Activated CD4-positive, alpha-beta T cell treated with anti-CD3 and anti-CD28 coated beads for 36 hours (primary cell): ENCODE measurements at regions of chr18 and their contacts with region 1.

Region 1: DNA sequence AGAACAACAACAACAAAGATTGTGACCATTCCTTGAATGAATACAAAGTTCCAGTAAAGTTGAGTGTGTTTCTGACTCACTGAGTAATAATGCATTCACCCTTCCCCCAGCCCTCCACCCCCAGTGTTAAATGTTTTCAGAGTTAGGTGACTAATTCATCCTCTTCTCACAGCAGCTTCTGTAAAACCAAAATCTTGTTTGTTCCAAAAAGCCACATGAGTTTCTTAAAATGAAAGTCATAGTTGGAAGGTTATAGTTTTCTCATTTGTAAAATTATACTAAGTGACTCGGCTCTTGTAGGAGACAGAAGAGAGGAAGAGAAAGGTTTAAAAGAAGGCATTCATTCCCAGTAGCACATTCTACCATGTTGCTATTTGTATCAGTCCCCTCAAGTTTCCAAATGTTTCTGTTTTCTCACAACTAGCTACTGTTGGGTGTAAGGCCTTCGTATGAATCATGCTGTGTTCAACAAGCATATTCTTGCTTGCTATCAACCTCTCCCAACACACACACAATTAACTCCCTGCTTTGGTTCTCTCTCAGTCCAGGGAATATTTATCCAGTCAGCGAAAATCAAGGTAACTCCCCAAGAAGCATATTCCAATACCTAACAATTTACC is 75.3 kb downstream of the MBD2 start:
- DNase-seq: peak; percentile 83
- ATAC-seq: peak; percentile 82
- H3K4me3 Mint-ChIP-seq: peak overlapping the region; percentile 47
- H3K27ac Mint-ChIP-seq: peak overlapping the region; percentile 94
- H3K4me1 Mint-ChIP-seq: peaks cover 56% of the 10 kb centered on the region
- H3K27me3 Mint-ChIP-seq: no peaks in the 10 kb centered on the region

Region 2: DNA sequence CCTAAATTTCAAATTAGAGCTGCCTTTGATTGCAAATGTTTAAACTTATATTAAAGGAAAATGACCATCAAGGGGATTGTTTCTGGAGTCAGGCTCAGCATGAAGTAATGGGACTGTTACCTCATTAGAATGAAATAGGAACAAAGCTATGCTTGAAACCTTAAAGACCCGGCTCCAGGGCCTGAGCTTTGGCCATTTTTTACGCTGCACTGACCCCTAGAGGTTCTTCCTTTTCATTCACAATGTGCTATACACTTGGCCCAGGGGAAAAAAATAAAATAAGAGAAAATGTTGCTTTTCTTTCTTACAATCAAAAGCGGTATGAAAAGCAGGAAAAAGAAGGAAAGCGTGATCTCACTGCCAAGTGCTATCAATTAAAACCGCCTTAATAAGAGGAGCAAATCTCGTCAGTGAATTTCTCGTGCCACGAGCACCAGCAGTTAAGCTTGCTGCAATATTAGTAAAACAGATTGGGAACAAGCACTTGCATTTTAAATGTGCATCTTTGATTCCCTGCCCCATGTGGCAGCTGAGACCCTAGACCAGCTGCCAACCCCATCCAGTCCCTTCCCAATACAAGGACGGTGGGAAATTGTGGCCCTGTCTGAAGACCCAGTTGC is 21.3 kb before region 1 on chr18:
- CTCF ChIA-PET with region 1: interaction called, 5 read pairs
- POLR2A ChIA-PET with region 1: no interaction called
- intact Hi-C with region 1: loop called in 1 of 2 experiments (anchors 1 kb)
- DNase-seq: peak; percentile 56
- ATAC-seq: peak; percentile 56
- H3K4me3 Mint-ChIP-seq: no peak overlapping the region
- H3K27ac Mint-ChIP-seq: no peak overlapping the region
- H3K4me1 Mint-ChIP-seq: peaks cover 10% of the 10 kb centered on the region
- H3K27me3 Mint-ChIP-seq: no peaks in the 10 kb centered on the region

Region 3: GRCh38 chr18:54181856-54182602 is 32.8 kb after region 1 on chr18:
- CTCF ChIA-PET with region 1: interaction called, 3 read pairs
- POLR2A ChIA-PET with region 1: no interaction called
- intact Hi-C with region 1: loop called (anchors 1 kb)
- DNase-seq: no peak
- ATAC-seq: peak; percentile 89
- H3K4me3 Mint-ChIP-seq: no peak overlapping the region
- H3K27ac Mint-ChIP-seq: no peak overlapping the region
- H3K4me1 Mint-ChIP-seq: peaks cover 10% of the 10 kb centered on the region
- H3K27me3 Mint-ChIP-seq: no peaks in the 10 kb centered on the region

Region 4: GRCh38 chr18:54261894-54262293 is 112.7 kb after region 1 on chr18:
- CTCF ChIA-PET with region 1: no interaction called
- POLR2A ChIA-PET with region 1: no interaction called
- intact Hi-C with region 1: loop called (anchors 1 kb)
- DNase-seq: peak; percentile 82
- ATAC-seq: peak; percentile 71
- H3K4me3 Mint-ChIP-seq: peak overlapping the region; percentile 52
- H3K27ac Mint-ChIP-seq: peak overlapping the region; percentile 90
- H3K4me1 Mint-ChIP-seq: peaks cover 54% of the 10 kb centered on the region
- H3K27me3 Mint-ChIP-seq: no peaks in the 10 kb centered on the region

Region 5: DNA sequence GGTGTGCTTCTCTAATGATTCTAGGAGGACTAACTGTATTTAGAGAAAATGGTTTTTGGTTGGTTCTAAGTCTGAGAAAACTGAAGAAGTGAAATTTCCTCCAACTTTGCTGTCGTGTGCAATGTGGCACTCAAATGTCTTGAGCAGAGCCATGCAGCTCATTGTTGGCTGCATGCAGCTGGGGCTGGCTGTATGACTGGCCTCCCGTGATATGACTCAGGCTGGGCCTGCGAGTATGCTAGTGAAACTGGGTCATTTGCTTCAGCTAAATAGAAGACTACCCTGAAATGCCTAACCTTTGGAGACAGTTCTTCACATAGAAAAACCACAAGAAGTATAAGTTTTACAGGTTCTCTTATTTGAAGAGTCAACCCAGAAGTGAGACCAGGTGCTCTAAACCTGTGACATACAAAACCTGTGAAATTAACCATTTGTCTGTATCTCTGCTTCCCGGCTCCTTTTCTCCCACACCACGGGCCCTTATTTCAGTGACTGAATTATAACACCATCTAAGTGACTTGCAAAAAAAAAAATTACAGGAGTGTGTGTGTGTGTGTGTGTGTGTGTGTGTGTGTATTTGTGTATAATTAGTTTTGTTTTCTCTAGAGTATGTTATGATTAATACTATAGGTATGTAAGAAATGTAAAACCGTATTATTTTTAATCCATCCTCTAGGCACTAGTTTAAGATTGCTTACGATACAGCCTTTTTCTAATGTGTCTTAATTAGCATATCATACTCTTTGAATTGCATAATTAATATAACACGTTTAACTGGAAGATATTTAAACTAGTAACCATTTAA is 136.0 kb after region 1 on chr18:
- CTCF ChIA-PET with region 1: no interaction called
- POLR2A ChIA-PET with region 1: interaction called, 3 read pairs
- intact Hi-C with region 1: loop called (anchors 1 kb)
- DNase-seq: peak; percentile 90
- ATAC-seq: peak; percentile 98
- H3K4me3 Mint-ChIP-seq: no peak overlapping the region
- H3K27ac Mint-ChIP-seq: peak overlapping the region; percentile 64
- H3K4me1 Mint-ChIP-seq: peaks cover 25% of the 10 kb centered on the region
- H3K27me3 Mint-ChIP-seq: no peaks in the 10 kb centered on the region

Region 6: DNA sequence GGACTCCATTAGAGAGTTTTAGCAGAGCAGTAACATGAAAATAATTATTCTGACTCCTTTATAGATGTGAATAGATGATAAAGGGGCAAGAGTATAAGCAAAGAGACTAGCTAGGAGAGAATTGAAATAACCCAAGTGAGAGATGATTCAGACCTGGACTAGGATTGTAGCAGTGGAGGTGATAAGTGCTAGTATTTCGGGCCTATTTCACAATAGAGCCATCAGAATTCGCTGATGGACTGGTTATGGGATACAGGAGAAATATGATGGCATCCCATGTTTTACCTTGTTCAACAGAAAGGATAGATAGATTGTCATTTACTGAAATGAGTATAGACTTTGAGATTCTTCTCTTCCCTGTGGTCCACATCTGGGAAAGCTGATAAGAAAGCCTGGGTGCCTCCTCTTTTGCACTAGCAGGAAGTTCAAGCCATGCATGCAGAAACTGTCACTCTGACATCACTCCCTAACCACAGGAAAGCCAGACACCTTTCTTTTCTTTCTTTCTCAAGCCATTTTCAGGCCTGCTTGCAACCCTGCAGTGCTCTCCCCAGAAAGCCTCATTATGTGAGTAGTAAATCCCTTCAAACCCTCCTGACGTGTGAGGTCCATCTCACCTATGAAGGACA is 467.1 kb after region 1 on chr18:
- CTCF ChIA-PET with region 1: no interaction called
- POLR2A ChIA-PET with region 1: no interaction called
- intact Hi-C with region 1: no loop called
- DNase-seq: no peak
- ATAC-seq: no peak
- H3K4me3 Mint-ChIP-seq: no peak overlapping the region
- H3K27ac Mint-ChIP-seq: no peak overlapping the region
- H3K4me1 Mint-ChIP-seq: peaks cover 7% of the 10 kb centered on the region
- H3K27me3 Mint-ChIP-seq: peaks cover 5% of the 10 kb centered on the region

Region 7: GRCh38 chr18:54717673-54718407 is 568.7 kb after region 1 on chr18:
- CTCF ChIA-PET with region 1: no interaction called
- POLR2A ChIA-PET with region 1: no interaction called
- intact Hi-C with region 1: loop called in 1 of 2 experiments (anchors 10 kb)
- DNase-seq: peak; percentile 74
- ATAC-seq: peak; percentile 91
- H3K4me3 Mint-ChIP-seq: peak overlapping the region; percentile 53
- H3K27ac Mint-ChIP-seq: peak overlapping the region; percentile 44
- H3K4me1 Mint-ChIP-seq: peaks cover 39% of the 10 kb centered on the region
- H3K27me3 Mint-ChIP-seq: peaks cover 6% of the 10 kb centered on the region